A549 (cell line): ENCODE measurements at regions of chr7 and their contacts with region 1.

Region 1: GRCh38 chr7:128135515-128136214 is 104.4 kb upstream of the LRRC4 start:
- DNase-seq: peak; percentile 48 to 81
- ATAC-seq: peak; percentile 94
- H3K4me3 ChIP-seq: peak overlapping the region; percentile 57
- H3K27ac ChIP-seq: peak overlapping the region; percentile 76 to 87; a peak in 5 of 6 replicates
- H3K4me1 ChIP-seq: peaks cover 8% of the 10 kb centered on the region
- CTCF ChIP-seq: peak; percentile 92
- EP300 ChIP-seq: no peak
- POLR2A ChIP-seq: 0 out of 2 replicates have a peak, but pooled peaks have one; percentile 5
- RAD21 ChIP-seq: peak; percentile 49 to 81; a peak in 4 of 5 replicates

Region 2: GRCh38 chr7:127708788-127709187 is 426.9 kb before region 1 on chr7:
- CTCF ChIA-PET with region 1: interaction called, 17 read pairs
- POLR2A ChIA-PET with region 1: no interaction called
- DNase-seq: peak; percentile 33 to 79
- ATAC-seq: peak; percentile 81 to 94
- H3K4me3 ChIP-seq: no peak overlapping the region
- H3K27ac ChIP-seq: no peak overlapping the region
- H3K4me1 ChIP-seq: peaks cover 10% of the 10 kb centered on the region; the same call in 1 of the 3 replicates
- CTCF ChIP-seq: peak; percentile 85
- EP300 ChIP-seq: no peak
- POLR2A ChIP-seq: no peak
- RAD21 ChIP-seq: peak; percentile 79 to 83

Region 3: GRCh38 chr7:128122576-128123290 is 12.9 kb before region 1 on chr7:
- CTCF ChIA-PET with region 1: interaction called, 15 read pairs
- POLR2A ChIA-PET with region 1: no interaction called
- DNase-seq: no peak
- ATAC-seq: no peak
- H3K4me3 ChIP-seq: no peak overlapping the region
- H3K27ac ChIP-seq: no peak overlapping the region
- H3K4me1 ChIP-seq: no peaks in the 10 kb centered on the region
- CTCF ChIP-seq: no peak
- EP300 ChIP-seq: no peak
- POLR2A ChIP-seq: no peak
- RAD21 ChIP-seq: no peak

Region 4: DNA sequence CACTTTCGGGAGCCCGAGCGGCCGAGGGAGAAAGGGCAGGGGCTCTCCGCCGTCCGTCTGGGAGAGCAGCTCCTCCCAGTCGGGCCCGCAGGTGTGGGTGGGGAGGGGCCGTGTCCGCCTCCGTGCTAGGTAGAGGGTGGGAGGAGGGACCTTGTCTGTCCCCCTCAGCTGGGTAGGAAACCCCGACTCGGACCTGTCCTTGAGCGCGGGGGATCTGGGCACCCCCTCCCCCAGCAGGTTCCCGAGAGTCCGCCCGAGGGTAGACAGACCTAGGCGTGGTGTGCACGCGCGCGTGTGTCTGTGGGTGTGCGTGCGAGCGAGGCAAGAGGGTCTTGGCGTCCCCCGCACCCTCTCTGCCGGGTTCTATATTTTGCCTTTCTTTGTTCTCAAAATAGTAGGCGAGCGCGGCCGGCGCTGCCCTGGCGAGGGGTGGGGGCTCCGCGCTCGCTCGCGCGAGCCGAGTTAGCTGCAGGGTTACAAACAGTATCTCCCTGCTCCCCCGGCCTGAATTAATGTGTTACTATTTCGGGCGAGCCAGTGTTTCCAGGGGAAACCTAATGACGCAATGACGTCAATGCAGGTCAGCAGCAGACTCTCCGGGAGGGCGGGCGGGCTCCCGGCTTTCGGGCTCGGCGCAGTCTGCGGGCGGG is 31.5 kb after region 1 on chr7:
- CTCF ChIA-PET with region 1: interaction called, 33 read pairs
- POLR2A ChIA-PET with region 1: interaction called, 3 read pairs
- DNase-seq: peak; percentile 60 to 72
- ATAC-seq: peak; percentile 33 to 50
- H3K4me3 ChIP-seq: peak overlapping the region; percentile 50
- H3K27ac ChIP-seq: peak overlapping the region; percentile 51 to 75; a peak in 5 of 6 replicates
- H3K4me1 ChIP-seq: peaks cover 25% of the 10 kb centered on the region
- CTCF ChIP-seq: no peak
- EP300 ChIP-seq: no peak
- POLR2A ChIP-seq: no peak
- RAD21 ChIP-seq: no peak

Region 5: DNA sequence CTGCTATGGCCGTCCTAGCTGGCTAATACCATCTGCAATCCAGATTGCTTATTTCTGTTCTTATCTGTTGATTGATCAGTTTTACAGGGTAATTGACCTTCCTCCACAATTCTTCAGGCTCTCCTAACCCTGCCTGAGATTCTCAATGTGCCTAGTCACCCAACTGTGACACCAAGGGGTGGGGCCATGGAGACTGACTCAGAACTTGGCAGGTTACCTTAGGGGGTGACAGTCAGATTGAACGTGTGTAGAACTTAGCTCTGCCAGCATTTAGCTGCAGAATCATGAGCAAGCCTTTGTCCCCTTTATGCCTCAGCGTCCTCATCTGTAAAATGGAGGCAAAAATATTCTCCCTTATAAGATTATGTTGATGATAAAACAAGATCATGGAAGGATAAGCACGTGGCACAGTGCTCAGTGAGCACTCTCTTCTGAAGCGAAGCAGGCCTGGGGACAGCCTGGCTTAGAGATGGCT is 86.3 kb after region 1 on chr7:
- CTCF ChIA-PET with region 1: interaction called, 13 read pairs
- POLR2A ChIA-PET with region 1: no interaction called
- DNase-seq: peak; percentile 47 to 57
- ATAC-seq: peak in 1 of 2 experiments; percentile 54; a peak in 3 of 6 replicates
- H3K4me3 ChIP-seq: no peak overlapping the region
- H3K27ac ChIP-seq: no peak overlapping the region
- H3K4me1 ChIP-seq: peaks cover 11% of the 10 kb centered on the region
- CTCF ChIP-seq: no peak
- EP300 ChIP-seq: no peak
- POLR2A ChIP-seq: no peak
- RAD21 ChIP-seq: no peak